Prostate gland (tissue), 2 donors: ENCODE measurements at regions of chr1 and their contacts with region 1.

Region 1: GRCh38 chr1:77888081-77888780 is at the start of gene NEXN:
- DNase-seq: peak; percentile 43
- H3K4me3 ChIP-seq: peak within 1 kb of the TSS; percentile 64 to 79
- H3K27ac ChIP-seq: peak within 1 kb of the TSS; percentile 77 to 83
- H3K4me1 ChIP-seq: no peaks in the 10 kb centered on the region
- H3K27me3 ChIP-seq: no peaks in the 10 kb centered on the region
- CTCF ChIP-seq: peak in 1 of 4 experiments; percentile 3
- POLR2A ChIP-seq: no peak
- total RNA-seq, gene NEXN: 13.2 to 14.1 TPM

Region 2: DNA sequence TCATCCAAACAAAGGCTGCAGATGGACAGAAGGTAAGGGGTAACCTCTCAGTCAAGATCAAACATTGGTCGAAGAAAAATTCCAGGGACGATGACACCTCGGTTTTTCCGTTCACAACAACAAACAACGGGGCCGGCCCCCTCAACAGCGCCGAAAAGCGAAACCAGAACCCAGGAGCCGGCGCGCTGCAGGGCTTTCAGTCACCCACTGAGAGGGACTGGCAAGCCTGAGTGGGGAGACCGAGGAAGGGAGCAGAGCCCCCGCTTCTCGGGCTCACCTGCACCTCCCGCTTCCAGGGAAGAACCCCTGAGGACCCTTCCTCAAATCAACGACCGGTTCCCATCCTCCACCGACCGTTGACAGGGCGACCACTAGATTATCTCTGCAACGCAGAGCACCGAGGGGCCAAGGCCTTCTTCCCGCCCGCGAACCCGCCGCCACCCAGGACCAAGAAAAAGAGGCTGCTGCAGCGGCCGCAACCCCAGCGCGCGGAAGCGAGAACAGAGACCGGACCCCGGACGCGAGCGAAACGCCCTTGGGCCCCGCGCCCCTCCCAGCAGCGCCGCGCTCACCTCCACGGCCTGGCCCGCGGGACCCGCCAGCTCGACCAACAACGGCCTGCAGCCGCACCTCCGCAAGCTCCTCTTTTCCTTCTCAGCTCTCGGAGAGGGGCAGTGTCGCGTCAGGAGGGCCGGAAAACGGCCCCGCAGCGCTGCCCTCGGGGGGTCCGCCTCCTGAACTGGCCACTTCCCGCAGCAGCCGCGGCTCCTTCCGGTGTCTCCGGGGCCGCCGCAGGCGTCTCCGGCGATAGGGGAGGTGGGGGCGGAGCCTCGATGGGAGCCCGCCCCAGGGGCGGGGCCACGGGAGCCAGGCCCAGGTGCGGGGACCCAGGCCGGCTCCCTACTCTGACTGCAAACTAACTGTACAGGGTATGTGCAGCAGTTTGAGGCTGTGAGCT is 128.9 kb before region 1 on chr1 and contains the start of gene USP33:
- intact Hi-C with region 1: loop called (anchors 10 kb)
- DNase-seq: peak; percentile 88
- H3K4me3 ChIP-seq: peak within 1 kb of the TSS; percentile 85 to 98
- H3K27ac ChIP-seq: peak within 1 kb of the TSS; percentile 90 to 92
- H3K4me1 ChIP-seq: no peaks in the 10 kb centered on the region
- H3K27me3 ChIP-seq: no peaks in the 10 kb centered on the region
- CTCF ChIP-seq: no peak
- POLR2A ChIP-seq: peak; percentile 91
- total RNA-seq, gene USP33: 46.2 to 49.9 TPM

Region 3: DNA sequence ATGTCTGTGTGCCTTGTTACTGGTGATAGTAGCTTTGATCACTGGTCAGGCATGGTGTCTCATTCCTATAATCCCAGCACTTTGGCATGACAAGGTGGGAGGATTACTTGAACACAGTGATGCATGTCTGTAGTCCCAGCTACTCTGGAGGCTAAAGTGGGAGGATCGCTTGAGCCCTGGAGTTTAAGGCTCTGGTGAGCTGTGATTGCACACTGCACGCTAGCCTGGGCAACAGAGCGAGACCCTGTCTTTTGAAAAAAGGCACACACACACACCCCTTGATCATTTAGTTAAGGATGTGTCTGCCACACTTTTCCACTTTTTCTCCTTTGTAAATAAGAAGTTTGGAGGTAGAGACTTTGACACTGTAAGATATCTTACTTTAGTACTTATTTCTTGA is 93.7 kb before region 1 on chr1:
- intact Hi-C with region 1: no loop called
- DNase-seq: no peak
- H3K4me3 ChIP-seq: no peak overlapping the region
- H3K27ac ChIP-seq: no peak overlapping the region
- H3K4me1 ChIP-seq: no peaks in the 10 kb centered on the region
- H3K27me3 ChIP-seq: no peaks in the 10 kb centered on the region
- CTCF ChIP-seq: no peak
- POLR2A ChIP-seq: no peak

Region 4: DNA sequence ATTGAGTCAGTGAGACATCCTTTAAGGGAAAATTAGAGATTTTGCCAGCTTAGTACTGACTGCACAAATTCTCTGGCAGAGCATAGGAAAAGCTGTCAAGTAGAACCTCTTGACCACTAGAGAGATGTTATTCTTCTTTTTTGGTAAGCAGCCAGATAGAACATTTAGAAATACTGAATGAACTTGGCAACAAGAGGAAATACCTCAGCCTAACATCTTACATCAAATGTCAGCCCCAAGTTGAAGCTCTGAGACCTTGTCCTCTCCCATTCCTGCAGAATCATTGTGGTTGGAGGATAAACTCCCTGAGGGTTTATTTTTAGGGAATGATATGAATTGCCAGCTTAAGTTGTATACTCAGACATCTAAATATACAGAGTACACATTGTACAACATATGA is 55.3 kb before region 1 on chr1:
- intact Hi-C with region 1: loop called (anchors 2 kb)
- DNase-seq: no peak
- H3K4me3 ChIP-seq: no peak overlapping the region
- H3K27ac ChIP-seq: peak overlapping the region; percentile 35 to 64
- H3K4me1 ChIP-seq: no peaks in the 10 kb centered on the region
- H3K27me3 ChIP-seq: no peaks in the 10 kb centered on the region
- CTCF ChIP-seq: no peak
- POLR2A ChIP-seq: no peak